CD4-positive, alpha-beta T cell (primary cell): ENCODE measurements at regions of chr16 and their contacts with region 1.

Region 1: DNA sequence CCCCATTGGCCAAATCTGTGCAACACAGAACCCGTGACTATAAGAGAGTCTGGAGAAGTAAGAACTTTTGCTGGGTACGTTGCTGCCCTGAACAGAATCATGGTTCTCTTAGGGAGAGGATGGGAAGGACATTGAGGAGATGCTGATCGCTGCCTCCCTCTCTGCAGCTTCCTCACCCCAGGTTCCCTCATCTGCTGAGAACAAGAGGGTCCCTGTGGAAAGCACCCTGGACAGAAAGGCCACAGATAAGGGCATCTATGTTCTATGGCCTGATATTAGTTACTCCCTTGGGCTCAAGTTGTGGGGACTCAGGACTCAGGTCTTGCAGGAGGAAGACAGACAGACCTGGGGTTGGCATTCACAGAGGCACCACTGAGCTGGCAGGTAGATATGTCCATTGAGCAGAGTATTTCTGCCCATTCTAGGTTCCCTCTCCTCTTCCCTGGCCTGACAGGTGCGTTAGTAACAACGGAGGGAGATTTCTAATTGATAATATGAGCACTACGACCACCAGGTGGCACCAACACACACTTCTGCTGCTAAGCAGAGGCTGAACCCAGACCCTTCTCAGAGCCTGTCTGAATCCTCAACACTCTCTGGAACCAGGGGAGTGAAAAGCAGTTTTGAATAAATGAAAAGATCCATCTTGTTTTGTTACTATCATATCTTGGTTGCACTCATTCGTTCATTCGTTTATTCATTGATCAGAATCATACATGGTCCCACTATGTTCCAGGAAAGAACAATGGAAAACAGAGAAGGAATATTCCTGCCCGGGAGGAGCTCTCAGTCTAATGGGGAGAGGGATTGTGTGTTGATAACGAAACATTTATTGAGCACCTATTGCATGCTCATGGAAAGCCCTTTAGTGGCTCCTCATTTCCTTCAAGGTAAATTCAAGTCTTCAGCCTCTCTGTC is 56.4 kb downstream of the SLC6A2 start:
- DNase-seq: peak; percentile 22 to 72 (median 35)
- ATAC-seq: peak; percentile 34
- H3K4me3 ChIP-seq: no peak overlapping the region
- H3K4me3 Mint-ChIP-seq: no peak overlapping the region
- H3K27ac ChIP-seq: no peak overlapping the region
- H3K27ac Mint-ChIP-seq: no peak overlapping the region
- H3K4me1 ChIP-seq: no peaks in the 10 kb centered on the region
- H3K4me1 Mint-ChIP-seq: no peaks in the 10 kb centered on the region
- H3K27me3 ChIP-seq: peaks cover 4 to 10% of the 10 kb centered on the region in 2 experiments
- H3K27me3 Mint-ChIP-seq: peaks cover 61% of the 10 kb centered on the region
- CTCF ChIP-seq: peak; percentile 75

Region 2: DNA sequence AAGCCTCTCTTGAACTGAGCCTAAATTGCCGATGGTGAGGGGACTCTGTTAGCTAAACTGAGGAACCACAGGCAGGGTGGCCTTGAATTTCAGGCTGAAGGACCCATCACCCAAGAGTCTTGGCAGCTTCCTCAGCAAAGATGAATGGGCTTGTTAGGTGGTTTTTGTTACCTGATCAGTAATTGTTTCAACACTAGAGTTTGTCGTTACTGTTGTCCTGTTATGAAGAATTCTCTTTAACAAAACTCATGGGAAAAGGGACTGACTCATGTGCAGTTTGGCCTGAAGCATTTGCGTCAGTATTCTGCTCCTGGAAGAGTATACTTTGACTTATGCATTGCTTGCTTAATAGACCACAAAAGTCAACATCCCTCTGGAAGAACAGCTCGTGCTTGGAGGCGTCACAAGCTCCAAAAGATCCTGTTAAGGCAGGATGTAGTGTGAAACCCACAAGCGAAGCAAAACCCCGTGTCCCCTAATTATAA is 1631.7 kb before region 1 on chr16:
- CTCF ChIA-PET with region 1: no interaction called
- POLR2A ChIA-PET with region 1: no interaction called
- intact Hi-C with region 1: no loop called
- DNase-seq: no peak
- ATAC-seq: no peak
- H3K4me3 ChIP-seq: no peak overlapping the region
- H3K4me3 Mint-ChIP-seq: no peak overlapping the region
- H3K27ac ChIP-seq: no peak overlapping the region
- H3K27ac Mint-ChIP-seq: no peak overlapping the region
- H3K4me1 ChIP-seq: no peaks in the 10 kb centered on the region
- H3K4me1 Mint-ChIP-seq: no peaks in the 10 kb centered on the region
- H3K27me3 ChIP-seq: no peaks in the 10 kb centered on the region
- H3K27me3 Mint-ChIP-seq: no peaks in the 10 kb centered on the region
- CTCF ChIP-seq: no peak

Region 3: DNA sequence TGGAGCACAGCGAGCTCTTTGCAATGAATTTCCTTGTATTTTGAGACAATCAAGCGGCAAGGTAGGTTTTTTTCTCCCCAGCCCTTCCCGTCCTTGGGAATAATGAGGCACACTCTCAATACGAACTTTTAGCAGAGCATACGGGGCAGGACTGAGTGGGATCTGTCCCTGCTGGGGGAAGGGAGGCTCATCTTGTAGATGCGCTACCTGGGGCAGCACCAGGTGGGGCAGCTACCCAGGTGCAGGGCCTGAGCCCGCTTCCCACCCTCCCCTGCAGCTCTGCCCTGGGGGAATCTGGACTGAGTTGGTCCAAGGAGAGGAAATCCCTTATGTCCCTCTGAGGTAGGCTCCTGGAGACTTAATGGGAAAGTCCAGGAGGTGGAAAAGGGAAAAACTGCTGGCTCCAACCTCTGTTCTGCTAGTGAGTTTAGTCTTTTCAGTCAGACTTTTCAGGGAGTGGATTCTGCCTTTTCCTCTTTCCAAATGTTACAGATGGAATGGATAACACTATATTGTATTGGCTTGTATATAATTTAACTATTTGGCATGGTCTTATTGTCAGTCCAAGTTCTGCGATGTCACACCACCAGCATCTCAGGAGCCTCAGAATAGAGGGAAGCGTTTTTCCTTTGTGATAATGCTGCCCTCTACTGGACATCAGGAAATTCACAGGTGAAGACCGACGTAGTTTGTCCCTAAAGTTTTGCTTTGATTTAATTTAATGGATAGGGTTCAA is 130.3 kb after region 1 on chr16:
- CTCF ChIA-PET with region 1: no interaction called
- POLR2A ChIA-PET with region 1: no interaction called
- intact Hi-C with region 1: loop called (anchors 1 kb)
- DNase-seq: peak in 5 of 14 experiments; percentile 3 to 62 (median 50)
- ATAC-seq: no peak
- H3K4me3 ChIP-seq: no peak overlapping the region
- H3K4me3 Mint-ChIP-seq: no peak overlapping the region
- H3K27ac ChIP-seq: no peak overlapping the region
- H3K27ac Mint-ChIP-seq: no peak overlapping the region
- H3K4me1 ChIP-seq: no peaks in the 10 kb centered on the region
- H3K4me1 Mint-ChIP-seq: no peaks in the 10 kb centered on the region
- H3K27me3 ChIP-seq: peaks cover 10% of the 10 kb centered on the region in 2 experiments
- H3K27me3 Mint-ChIP-seq: peaks cover 29% of the 10 kb centered on the region
- CTCF ChIP-seq: peak; percentile 71